ENCODE measurements at regions of chr2 and their contacts with region 1.

Region 1: GRCh38 chr2:119011162-119011909 is 69.3 kb downstream of the MARCO start:
- DNase-seq: peak; percentile 22
- H3K4me3 ChIP-seq: no peak overlapping the region
- H3K27ac ChIP-seq: no peak overlapping the region
- H3K4me1 ChIP-seq: no peaks in the 10 kb centered on the region
- H3K27me3 ChIP-seq: peaks cover 3% of the 10 kb centered on the region
- CTCF ChIP-seq: peak in 3 of 4 experiments; percentile 37 to 64 (median 61)
- POLR2A ChIP-seq: no peak

Region 2: DNA sequence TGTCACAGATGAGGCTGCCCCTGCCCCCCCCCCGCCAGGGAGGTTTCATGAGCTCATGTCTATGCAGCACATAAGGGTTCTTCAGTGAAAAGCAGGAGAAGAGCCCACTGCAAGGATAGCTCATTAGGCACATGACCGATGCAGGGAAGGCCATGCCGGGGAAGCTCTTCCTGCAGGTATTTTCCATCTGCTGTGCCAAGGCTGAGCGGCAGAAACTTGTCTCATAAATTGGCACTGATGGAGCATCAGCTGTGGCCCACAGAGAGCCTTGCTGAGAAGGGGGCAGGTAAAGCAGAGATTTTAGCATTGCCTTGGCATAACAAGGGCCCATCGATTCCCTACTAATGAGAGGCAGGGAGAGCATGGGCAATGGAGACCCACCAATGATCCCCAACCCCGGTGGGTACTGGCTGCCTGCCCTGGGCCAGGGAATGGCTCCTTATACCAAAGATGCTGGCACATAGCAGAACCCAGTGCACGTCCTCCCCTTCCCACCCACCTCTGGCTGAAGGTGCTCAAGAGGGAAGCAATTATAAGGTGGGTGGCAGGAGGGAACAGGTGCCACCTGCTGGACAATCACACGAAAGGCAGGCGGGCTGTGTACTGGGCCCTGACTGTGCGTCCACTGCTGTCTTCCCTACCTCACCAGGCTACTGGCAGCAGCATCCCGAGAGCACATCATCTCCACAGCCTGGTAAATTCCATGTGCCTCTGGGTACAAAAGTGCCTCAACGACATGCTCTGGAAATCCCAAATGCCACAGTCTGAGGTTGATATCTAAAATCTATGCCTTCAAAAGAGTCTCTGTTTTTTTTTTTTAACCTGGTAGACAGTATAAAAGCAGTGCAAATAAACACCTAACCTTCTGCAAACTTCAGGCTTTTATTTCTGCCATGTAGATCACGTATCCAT is 253.7 kb after region 1 on chr2:
- intact Hi-C with region 1: loop called (anchors 2 kb)
- DNase-seq: peak; percentile 50
- H3K4me3 ChIP-seq: no peak overlapping the region
- H3K27ac ChIP-seq: no peak overlapping the region
- H3K4me1 ChIP-seq: no peaks in the 10 kb centered on the region
- H3K27me3 ChIP-seq: no peaks in the 10 kb centered on the region
- CTCF ChIP-seq: peak; percentile 49 to 83 (median 74)
- POLR2A ChIP-seq: no peak

Region 3: DNA sequence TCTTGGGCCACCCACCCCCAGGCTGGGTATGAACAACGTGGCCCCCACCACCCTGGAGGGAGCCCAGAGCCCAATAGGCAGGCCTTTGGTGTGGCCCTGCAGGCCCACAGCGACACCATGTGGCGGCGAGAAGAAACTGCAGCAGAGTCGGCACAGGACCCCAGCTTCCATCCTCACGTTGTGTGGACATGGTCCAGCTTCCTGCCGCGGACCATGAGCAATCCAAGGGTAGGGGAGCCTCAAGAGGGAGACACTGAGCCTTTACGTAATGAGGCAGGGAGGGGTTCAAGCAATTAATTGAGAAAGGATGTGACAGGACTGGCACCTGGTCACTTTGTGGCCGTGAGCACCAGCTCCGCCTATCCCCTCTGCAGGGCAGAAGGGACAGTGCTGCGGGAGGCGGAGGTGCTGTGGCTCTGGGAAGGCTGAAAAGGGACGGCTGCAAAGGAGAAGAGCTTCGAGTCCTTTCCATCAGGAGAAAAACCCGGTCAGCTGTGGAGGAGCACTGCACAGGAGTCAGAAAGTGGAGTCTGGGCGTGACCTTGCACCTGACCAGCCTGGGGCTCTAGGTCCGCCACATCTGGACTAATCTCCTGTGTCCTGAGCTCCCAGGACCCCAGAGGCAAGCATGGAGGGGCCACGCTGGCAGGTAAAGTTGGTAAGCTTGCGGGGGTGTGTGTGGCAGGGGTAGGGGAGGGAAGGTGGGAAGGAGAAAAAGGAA is 465.1 kb after region 1 on chr2:
- intact Hi-C with region 1: loop called (anchors 10 kb)
- DNase-seq: peak; percentile 17
- H3K4me3 ChIP-seq: no peak overlapping the region
- H3K27ac ChIP-seq: no peak overlapping the region
- H3K4me1 ChIP-seq: no peaks in the 10 kb centered on the region
- H3K27me3 ChIP-seq: no peaks in the 10 kb centered on the region
- CTCF ChIP-seq: peak; percentile 82 to 94 (median 86)
- POLR2A ChIP-seq: no peak

Region 4: GRCh38 chr2:119659601-119660342 is 648.4 kb after region 1 on chr2:
- intact Hi-C with region 1: loop called (anchors 10 kb)
- DNase-seq: no peak
- H3K4me3 ChIP-seq: no peak overlapping the region
- H3K27ac ChIP-seq: no peak overlapping the region
- H3K4me1 ChIP-seq: no peaks in the 10 kb centered on the region
- H3K27me3 ChIP-seq: no peaks in the 10 kb centered on the region
- CTCF ChIP-seq: peak; percentile 69 to 75 (median 71)
- POLR2A ChIP-seq: no peak

Measured in prostate gland (tissue), 2 donors.